ENCODE measurements at regions of chr2 and their contacts with region 1.

Region 1: DNA sequence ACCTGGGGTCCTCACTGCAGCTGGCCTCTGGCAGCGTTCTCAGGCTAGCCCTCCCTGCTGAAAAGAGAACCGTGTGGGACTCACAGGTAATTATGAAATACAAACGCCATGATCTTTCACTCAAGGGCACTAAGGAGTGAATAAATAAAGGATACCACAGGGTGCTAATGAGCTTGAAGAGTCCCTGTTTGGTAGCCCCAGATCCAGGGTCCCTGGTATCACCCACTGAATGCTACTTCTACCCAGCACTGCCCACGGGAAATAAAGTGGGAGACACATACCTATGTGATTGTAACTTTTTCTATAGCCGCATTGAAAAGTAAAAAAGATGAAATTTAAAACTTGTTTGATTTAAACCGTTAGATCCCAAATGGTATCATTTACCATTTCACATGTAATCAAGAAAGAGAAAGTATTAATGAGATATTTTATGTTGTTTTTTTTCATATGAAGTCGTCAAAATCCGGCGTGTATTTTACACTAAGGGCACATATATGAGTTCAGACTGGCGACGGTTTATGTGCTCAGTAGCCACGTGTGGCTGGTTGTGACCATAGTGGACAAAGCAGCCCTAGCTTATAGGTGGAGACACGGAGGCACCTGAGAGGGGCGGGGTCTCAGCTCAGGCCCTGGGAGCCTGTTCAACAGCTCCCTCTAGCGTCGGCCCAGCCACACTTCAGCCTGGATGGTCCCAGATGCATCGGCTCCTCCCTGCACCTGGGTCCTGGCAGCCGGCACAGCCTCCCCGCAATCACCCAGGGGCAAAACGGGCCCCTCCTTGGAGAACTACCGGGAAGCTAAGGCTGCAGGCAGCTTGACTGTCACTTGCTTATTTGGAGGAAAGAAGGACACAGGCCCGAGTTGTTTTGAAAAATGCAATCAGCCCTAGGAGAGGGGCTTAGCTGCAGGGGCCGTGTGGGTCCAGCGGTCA is 39.2 kb downstream of the ODC1 start:
- DNase-seq: peak; percentile 92
- ATAC-seq: peak; percentile 39
- H3K4me3 ChIP-seq: no peak overlapping the region
- H3K27ac ChIP-seq: peak overlapping the region; percentile 99
- H3K4me1 ChIP-seq: peaks cover 70% of the 10 kb centered on the region
- H3K27me3 ChIP-seq: no peaks in the 10 kb centered on the region
- CTCF ChIP-seq: peak; percentile 97

Region 2: DNA sequence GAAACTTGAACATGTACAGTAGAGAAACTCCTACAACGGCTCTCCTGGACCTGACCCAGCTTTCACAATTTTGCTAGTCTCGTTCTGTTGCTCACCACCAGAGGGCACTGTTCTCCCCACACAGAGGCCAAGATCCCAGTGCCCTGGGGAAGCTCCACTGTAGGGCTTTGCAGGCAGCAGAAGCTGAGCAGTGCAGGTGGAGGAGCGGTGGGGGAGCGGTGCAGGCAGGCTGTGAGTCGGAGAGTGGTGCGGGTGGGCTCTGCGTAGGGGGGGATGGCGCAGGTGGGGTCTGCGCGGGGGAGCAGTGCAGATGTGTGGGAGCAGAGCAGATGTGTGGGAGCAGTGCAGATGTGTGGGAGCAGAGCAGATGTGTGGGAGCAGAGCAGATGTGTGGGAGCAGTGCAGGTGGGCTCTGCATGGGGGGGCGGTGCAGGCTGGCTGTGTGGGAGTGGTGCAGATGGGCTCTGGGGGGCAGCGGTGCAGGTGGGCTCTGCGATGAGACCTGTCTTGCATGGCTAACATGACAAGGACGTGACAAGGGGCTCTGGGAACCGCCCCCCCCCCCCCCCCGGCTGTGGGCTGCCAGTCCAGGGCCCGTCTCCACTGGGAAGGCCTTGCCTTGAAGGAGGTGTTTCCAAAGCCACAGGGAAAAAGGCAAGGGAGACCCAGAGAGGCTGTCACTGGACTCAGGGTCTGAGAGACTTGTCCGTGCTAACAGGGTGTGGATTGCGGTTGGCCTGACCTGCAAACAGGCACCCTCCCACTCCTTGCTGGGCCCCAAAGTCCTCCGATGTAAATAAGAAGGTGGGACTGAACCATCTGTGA is 336.0 kb before region 1 on chr2:
- CTCF ChIA-PET with region 1: interaction called, 13 read pairs
- POLR2A ChIA-PET with region 1: no interaction called
- intact Hi-C with region 1: no loop called
- DNase-seq: peak; percentile 88
- ATAC-seq: peak; percentile 98
- H3K4me3 ChIP-seq: no peak overlapping the region
- H3K27ac ChIP-seq: no peak overlapping the region
- H3K4me1 ChIP-seq: no peaks in the 10 kb centered on the region
- H3K27me3 ChIP-seq: peaks cover 26% of the 10 kb centered on the region
- CTCF ChIP-seq: peak; percentile 90

Region 3: GRCh38 chr2:10260130-10260529 is 148.8 kb before region 1 on chr2:
- CTCF ChIA-PET with region 1: interaction called, 4 read pairs
- POLR2A ChIA-PET with region 1: no interaction called
- intact Hi-C with region 1: loop called (anchors 1 kb)
- DNase-seq: peak; percentile 92
- ATAC-seq: peak; percentile 96
- H3K4me3 ChIP-seq: no peak overlapping the region
- H3K27ac ChIP-seq: no peak overlapping the region
- H3K4me1 ChIP-seq: peaks cover 28% of the 10 kb centered on the region
- H3K27me3 ChIP-seq: no peaks in the 10 kb centered on the region
- CTCF ChIP-seq: peak; percentile 48

Region 4: GRCh38 chr2:10282918-10283728 is 125.8 kb before region 1 on chr2:
- CTCF ChIA-PET with region 1: interaction called, 11 read pairs
- POLR2A ChIA-PET with region 1: no interaction called
- intact Hi-C with region 1: loop called (anchors 5 kb)
- DNase-seq: peak; percentile 98
- ATAC-seq: peak; percentile 77
- H3K4me3 ChIP-seq: no peak overlapping the region
- H3K27ac ChIP-seq: peak overlapping the region; percentile 95
- H3K4me1 ChIP-seq: peaks cover 60% of the 10 kb centered on the region
- H3K27me3 ChIP-seq: no peaks in the 10 kb centered on the region
- CTCF ChIP-seq: no peak

Region 5: DNA sequence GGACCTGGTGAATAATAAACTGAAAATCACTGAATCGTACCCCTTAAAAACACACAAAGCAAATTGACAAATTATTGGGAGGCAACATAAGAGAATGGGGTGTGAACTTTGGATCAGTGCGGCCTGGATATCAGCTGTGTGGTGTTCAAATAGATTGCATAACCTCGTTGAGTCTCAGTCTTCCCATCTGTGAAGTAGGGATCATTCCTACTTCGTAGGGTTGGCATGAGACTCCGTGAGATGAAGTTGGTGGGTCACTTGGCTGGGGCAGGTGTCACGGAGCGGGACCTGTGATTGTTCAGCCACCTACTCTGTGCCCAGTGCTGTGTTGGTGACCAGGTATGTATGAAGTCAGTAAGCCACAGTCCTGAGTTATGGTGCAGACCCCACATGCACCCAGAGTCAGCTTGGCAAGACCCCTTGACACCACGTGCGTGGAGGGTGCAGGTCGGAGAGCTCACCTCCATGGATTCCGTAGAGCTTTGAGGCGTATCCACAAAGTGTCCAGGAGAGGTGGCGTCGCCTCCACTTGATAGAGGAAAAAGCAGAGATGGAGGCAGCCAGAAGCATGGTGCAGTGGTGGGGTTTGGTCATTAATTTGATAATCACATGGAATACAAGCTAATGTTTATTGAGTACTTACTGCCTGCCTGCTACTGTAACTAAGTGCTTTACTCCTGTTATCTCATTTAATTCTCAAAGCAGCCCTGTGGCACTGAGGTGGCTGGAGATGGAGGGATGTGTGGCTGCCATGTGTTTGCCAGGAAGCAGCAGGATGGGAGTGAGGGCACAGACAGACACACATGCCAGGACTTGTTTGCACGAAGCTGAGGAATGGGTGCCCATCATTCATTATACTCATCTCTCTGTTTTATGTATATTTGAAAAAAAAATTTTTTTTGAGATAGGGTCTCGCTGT is 70.4 kb before region 1 on chr2:
- CTCF ChIA-PET with region 1: no interaction called
- POLR2A ChIA-PET with region 1: no interaction called
- intact Hi-C with region 1: loop called (anchors 5 kb)
- DNase-seq: no peak
- ATAC-seq: no peak
- H3K4me3 ChIP-seq: no peak overlapping the region
- H3K27ac ChIP-seq: no peak overlapping the region
- H3K4me1 ChIP-seq: peaks cover 34% of the 10 kb centered on the region
- H3K27me3 ChIP-seq: no peaks in the 10 kb centered on the region
- CTCF ChIP-seq: no peak

Region 6: DNA sequence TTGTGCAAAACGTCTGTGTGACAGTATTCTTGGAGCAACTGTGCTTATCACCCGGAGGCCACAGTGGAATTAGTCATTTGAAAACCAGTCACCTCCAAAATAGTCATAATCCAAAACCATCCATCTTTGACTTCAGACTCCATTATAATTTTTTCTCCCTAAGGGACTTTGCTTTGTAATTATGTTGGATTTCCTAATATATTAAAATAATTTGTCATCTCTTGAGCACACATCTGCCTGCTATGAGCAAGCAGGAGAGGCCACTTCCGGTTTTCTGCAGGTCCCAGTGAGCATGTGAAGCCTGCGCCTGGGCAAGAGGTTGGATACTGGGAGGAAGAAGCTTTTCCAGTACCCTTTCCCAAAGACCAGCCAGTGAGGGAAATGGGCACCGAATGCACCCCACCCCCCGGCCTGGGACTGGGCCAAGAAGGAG is 18.5 kb before region 1 on chr2:
- CTCF ChIA-PET with region 1: interaction called, 9 read pairs
- POLR2A ChIA-PET with region 1: interaction called, 5 read pairs
- intact Hi-C with region 1: loop called (anchors 1 kb)
- DNase-seq: peak; percentile 79
- ATAC-seq: peak; percentile 51
- H3K4me3 ChIP-seq: peak overlapping the region; percentile 16; the same call in 1 of the 2 replicates
- H3K27ac ChIP-seq: peak overlapping the region; percentile 95
- H3K4me1 ChIP-seq: peaks cover 75% of the 10 kb centered on the region
- H3K27me3 ChIP-seq: no peaks in the 10 kb centered on the region
- CTCF ChIP-seq: no peak

Region 7: DNA sequence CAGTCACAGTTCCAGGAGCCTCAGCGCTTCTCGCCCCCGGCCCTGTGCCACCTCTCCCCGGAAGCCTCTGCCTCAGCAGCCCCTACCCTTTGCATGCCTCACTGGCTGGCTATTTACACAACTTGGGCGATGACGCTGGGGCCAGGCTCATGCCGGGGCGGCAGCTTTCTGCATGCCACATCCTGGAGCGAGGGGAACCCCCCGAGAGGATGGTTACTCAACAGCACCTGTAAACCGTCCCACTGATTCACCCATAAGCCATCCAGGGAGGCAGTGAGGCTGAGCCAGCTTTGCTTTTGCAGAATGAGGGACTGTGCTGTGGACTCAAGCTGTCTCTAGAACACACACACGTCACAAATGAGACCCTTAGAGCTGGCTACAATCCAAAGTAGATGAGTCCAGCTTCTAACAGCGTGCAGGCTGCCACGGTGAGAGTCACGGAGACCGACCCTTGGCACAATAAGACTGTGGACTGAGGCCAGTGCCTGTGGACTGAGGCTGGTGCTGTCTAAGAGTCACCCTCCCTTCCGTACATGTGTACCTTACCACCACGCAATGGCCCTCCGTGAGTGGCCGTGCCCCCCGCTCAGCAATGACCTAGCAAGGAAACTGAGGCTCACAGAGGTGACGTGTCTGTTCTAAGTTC is 84.8 kb after region 1 on chr2:
- CTCF ChIA-PET with region 1: no interaction called
- POLR2A ChIA-PET with region 1: no interaction called
- intact Hi-C with region 1: no loop called
- DNase-seq: peak; percentile 99
- ATAC-seq: peak; percentile 85
- H3K4me3 ChIP-seq: no peak overlapping the region
- H3K27ac ChIP-seq: peak overlapping the region; percentile 97
- H3K4me1 ChIP-seq: peaks cover 30% of the 10 kb centered on the region
- H3K27me3 ChIP-seq: no peaks in the 10 kb centered on the region
- CTCF ChIP-seq: no peak

Measured in PC-3 (cell line).